ENCODE measurements at regions of chr11 and their contacts with region 1.

Region 1: GRCh38 chr11:86162239-86162638 is 82.3 kb upstream of the EED start:
- DNase-seq: no peak
- ATAC-seq: peak; percentile 29; the same call in 2 of the 3 replicates
- H3K4me3 ChIP-seq: no peak overlapping the region
- H3K27ac ChIP-seq: no peak overlapping the region
- H3K4me1 ChIP-seq: peaks cover 22% of the 10 kb centered on the region
- H3K27me3 ChIP-seq: no peaks in the 10 kb centered on the region
- CTCF ChIP-seq: no peak
- EP300 ChIP-seq: no peak
- POLR2A ChIP-seq: no peak
- RAD21 ChIP-seq: no peak

Region 2: DNA sequence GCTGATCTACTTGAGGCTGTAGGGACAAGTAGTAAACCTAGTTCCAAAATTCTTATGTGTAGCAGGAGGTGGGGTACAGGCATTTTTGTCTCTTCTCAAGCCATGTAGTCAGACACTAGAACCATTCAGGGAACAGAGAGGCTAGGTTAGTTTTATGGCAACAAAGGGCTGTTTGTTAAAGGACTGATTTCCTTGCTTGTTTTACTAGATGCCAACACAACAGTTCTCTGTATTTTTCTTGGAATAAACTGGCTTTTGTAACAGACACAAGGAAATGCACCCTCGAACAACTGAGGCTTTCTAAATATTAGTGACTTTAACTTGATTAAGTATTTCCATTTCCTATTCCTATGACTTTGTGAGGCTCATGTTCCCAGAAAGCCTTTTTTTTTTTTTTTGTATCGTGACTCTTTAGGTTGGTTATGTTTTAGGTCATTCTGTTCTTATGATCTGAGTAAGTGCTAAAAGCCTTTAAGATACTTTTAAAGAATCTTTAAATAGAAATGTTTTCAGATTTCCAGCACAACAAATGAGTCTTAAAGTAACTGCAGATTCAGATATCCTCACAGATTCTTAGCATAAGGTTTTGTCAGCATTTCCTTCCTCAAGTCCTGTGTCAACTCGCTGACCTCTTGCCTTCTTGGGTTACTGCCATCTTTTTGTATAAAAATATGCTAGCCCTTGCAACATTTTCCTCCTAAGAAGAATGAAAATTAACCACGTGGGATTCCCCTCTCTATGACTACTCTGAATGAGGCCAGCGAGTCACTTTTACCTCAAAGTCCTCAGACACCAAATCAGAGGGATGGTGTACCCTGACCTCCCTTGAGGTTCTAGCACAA is 214.6 kb before region 1 on chr11:
- CTCF ChIA-PET with region 1: no interaction called
- POLR2A ChIA-PET with region 1: no interaction called
- RAD21 ChIA-PET with region 1: no interaction called
- SMC1A ChIA-PET with region 1: no interaction called
- in situ Hi-C with region 1: no loop called
- intact Hi-C with region 1: no loop called
- DNase-seq: no peak
- ATAC-seq: peak; percentile 67
- H3K4me3 ChIP-seq: no peak overlapping the region
- H3K27ac ChIP-seq: no peak overlapping the region
- H3K4me1 ChIP-seq: peaks cover 13% of the 10 kb centered on the region
- H3K27me3 ChIP-seq: no peaks in the 10 kb centered on the region
- CTCF ChIP-seq: no peak
- EP300 ChIP-seq: no peak
- POLR2A ChIP-seq: no peak
- RAD21 ChIP-seq: no peak

Region 3: DNA sequence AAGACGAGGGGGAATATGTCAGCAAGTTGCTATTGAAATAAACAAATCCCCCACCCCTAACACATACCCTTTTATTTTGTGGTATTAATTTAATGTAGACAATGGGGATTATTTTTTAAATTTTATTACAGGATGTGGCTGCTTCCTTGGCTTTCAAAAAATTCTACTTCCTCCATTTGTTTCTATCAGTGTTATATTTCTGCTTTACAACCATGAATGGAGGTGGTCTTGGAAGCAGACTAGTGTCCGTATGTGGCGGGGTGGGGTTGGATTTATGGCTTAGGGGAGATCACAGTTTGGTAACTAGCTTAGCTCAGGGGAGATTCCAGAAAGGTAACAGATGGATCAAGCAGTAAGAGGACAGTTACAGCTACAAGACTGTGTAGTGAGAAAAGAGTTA is 54.0 kb before region 1 on chr11:
- CTCF ChIA-PET with region 1: no interaction called
- POLR2A ChIA-PET with region 1: no interaction called
- RAD21 ChIA-PET with region 1: no interaction called
- SMC1A ChIA-PET with region 1: no interaction called
- in situ Hi-C with region 1: no loop called
- intact Hi-C with region 1: no loop called
- DNase-seq: no peak
- ATAC-seq: peak; percentile 39; the same call in 1 of the 3 replicates
- H3K4me3 ChIP-seq: no peak overlapping the region
- H3K27ac ChIP-seq: no peak overlapping the region
- H3K4me1 ChIP-seq: no peaks in the 10 kb centered on the region
- H3K27me3 ChIP-seq: no peaks in the 10 kb centered on the region
- CTCF ChIP-seq: no peak
- EP300 ChIP-seq: no peak
- POLR2A ChIP-seq: no peak
- RAD21 ChIP-seq: no peak

Region 4: GRCh38 chr11:86145439-86146156 is 16.6 kb before region 1 on chr11:
- CTCF ChIA-PET with region 1: interaction called, 7 read pairs
- POLR2A ChIA-PET with region 1: interaction called, 6 read pairs
- RAD21 ChIA-PET with region 1: interaction called, 5 read pairs
- SMC1A ChIA-PET with region 1: interaction called, 25 read pairs
- in situ Hi-C with region 1: no loop called
- intact Hi-C with region 1: no loop called
- DNase-seq: no peak
- ATAC-seq: peak; percentile 47
- H3K4me3 ChIP-seq: no peak overlapping the region
- H3K27ac ChIP-seq: no peak overlapping the region
- H3K4me1 ChIP-seq: no peaks in the 10 kb centered on the region
- H3K27me3 ChIP-seq: no peaks in the 10 kb centered on the region
- CTCF ChIP-seq: no peak
- EP300 ChIP-seq: no peak
- POLR2A ChIP-seq: no peak
- RAD21 ChIP-seq: no peak

Measured in GM12878 (cell line).